ENCODE measurements at regions of chr7 and their contacts with region 1.

Region 1: DNA sequence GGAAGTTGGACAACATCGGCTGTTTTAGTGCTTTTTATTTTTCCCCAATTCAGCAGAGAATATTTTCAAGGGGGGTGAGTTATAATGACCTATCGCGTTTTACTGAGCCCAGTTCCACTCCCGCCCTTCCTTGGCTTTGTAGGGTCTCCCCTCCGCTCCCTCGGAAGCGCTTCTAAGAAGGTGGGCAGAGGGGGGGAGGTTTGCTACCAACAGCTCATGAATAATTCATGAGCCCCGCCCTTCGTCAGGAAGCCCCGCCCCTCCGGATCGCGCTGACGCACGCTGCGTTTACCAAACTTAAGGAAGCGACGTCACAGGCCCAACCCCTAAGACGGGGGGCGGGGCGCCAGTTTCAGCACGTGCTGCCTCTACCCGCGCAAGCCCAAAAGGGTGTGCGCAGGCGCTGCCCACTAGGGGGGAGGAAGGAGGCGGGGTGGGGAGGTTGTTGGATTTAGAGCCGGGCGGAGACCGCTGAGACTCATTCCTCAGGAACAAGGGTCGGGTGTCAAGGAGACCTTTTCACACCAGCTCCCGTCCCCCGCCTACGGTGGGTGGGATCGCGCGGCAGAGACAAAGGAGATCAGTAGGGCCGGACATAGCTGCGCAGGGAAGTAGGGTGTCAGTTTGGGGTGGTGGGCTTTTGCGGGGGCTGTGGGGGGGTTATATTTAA is 529 bp upstream of the MEPCE start:
- DNase-seq: peak; percentile 91 to 100 (median 95)
- ATAC-seq: peak; percentile 73
- H3K4me3 ChIP-seq: peak overlapping the region; percentile 82
- H3K27ac ChIP-seq: peak overlapping the region; percentile 98
- H3K4me1 ChIP-seq: peaks cover 33 to 50% of the 10 kb centered on the region in 2 experiments
- H3K27me3 ChIP-seq: no peaks in the 10 kb centered on the region
- CTCF ChIP-seq: peak in 1 of 3 experiments; percentile 17; a peak in 1 of 6 replicates
- EP300 ChIP-seq: peak; percentile 50
- POLR2A ChIP-seq: peak; percentile 96
- RAD21 ChIP-seq: no peak; a peak in 1 of 4 replicates

Region 2: DNA sequence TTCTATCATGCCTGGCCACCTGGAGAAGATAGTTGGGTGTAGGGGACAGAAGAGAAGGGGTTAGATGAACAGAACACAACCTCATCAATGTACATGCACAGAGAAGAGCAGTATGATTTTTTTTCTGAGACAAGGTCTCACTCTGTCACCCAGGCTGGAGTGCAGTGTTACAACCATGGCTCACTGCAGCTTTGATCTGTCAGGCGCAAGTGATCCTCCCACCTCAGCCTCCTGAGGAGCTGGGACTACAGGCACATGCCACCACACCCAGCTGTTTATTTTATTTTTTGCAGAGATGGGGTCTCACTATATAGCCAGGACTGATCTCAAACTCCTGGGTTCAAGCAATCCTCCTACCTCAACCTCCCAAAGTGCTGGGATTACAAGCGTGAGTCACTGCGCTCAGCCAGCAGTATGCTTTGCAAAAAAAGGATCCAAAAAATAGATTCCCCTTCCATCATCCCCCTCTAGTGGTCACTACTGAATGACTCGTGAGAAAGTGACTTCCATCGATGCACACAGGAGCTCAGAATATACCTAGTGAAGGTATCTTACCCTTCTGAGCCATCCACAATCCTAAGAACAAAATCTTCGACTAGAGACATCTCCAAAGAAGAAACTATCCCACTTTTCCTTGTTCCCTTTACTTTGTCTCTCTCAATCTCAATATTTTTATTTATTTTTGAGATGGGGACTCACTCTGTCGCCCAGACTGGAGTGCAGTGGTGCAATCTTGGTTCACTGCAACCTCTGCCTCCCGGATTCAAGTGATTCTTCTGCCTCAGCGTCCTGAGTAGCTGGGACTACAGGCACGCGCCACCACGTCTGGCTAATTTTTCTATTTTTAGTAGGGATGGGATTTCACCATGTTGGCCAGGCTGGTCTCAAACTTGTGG is 21.6 kb before region 1 on chr7:
- CTCF ChIA-PET with region 1: no interaction called
- POLR2A ChIA-PET with region 1: interaction called, 13 read pairs
- in situ Hi-C with region 1: no loop called
- intact Hi-C with region 1: no loop called
- DNase-seq: peak; percentile 69 to 85 (median 75)
- ATAC-seq: peak; percentile 96
- H3K4me3 ChIP-seq: no peak overlapping the region
- H3K27ac ChIP-seq: no peak overlapping the region
- H3K4me1 ChIP-seq: peaks cover 4 to 5% of the 10 kb centered on the region in 2 experiments; a peak in 1 of 5 replicates
- H3K27me3 ChIP-seq: peaks cover 24 to 33% of the 10 kb centered on the region in 2 experiments
- CTCF ChIP-seq: peak; percentile 74 to 92 (median 86)
- EP300 ChIP-seq: peak; percentile 35; the same call in 1 of the 2 replicates
- POLR2A ChIP-seq: no peak
- RAD21 ChIP-seq: peak; percentile 56 to 79

Region 3: GRCh38 chr7:100418930-100419659 is 10.0 kb before region 1 on chr7:
- CTCF ChIA-PET with region 1: no interaction called
- POLR2A ChIA-PET with region 1: interaction called, 33 read pairs
- in situ Hi-C with region 1: no loop called
- intact Hi-C with region 1: no loop called
- DNase-seq: no peak
- ATAC-seq: peak; percentile 72
- H3K4me3 ChIP-seq: no peak overlapping the region
- H3K27ac ChIP-seq: no peak overlapping the region
- H3K4me1 ChIP-seq: no peaks in the 10 kb centered on the region
- H3K27me3 ChIP-seq: no peaks in the 10 kb centered on the region
- CTCF ChIP-seq: no peak
- EP300 ChIP-seq: no peak
- POLR2A ChIP-seq: no peak
- RAD21 ChIP-seq: no peak

Region 4: GRCh38 chr7:100455206-100455605 is 26.1 kb after region 1 on chr7:
- CTCF ChIA-PET with region 1: no interaction called
- POLR2A ChIA-PET with region 1: interaction called, 30 read pairs
- in situ Hi-C with region 1: no loop called
- intact Hi-C with region 1: loop called (anchors 1 kb)
- DNase-seq: no peak
- ATAC-seq: no peak
- H3K4me3 ChIP-seq: no peak overlapping the region
- H3K27ac ChIP-seq: no peak overlapping the region
- H3K4me1 ChIP-seq: peaks cover 3 to 23% of the 10 kb centered on the region in 2 experiments; a peak in 3 of 5 replicates
- H3K27me3 ChIP-seq: no peaks in the 10 kb centered on the region
- CTCF ChIP-seq: no peak
- EP300 ChIP-seq: no peak
- POLR2A ChIP-seq: no peak
- RAD21 ChIP-seq: no peak

Region 5: GRCh38 chr7:100509231-100509630 is 80.1 kb after region 1 on chr7:
- CTCF ChIA-PET with region 1: no interaction called
- POLR2A ChIA-PET with region 1: no interaction called
- in situ Hi-C with region 1: no loop called
- intact Hi-C with region 1: no loop called
- DNase-seq: peak in 1 of 4 experiments; percentile 2
- ATAC-seq: no peak
- H3K4me3 ChIP-seq: no peak overlapping the region
- H3K27ac ChIP-seq: no peak overlapping the region
- H3K4me1 ChIP-seq: peaks cover 19 to 39% of the 10 kb centered on the region in 2 experiments; a peak in 4 of 5 replicates
- H3K27me3 ChIP-seq: no peaks in the 10 kb centered on the region
- CTCF ChIP-seq: no peak
- EP300 ChIP-seq: no peak
- POLR2A ChIP-seq: no peak
- RAD21 ChIP-seq: no peak

Region 6: DNA sequence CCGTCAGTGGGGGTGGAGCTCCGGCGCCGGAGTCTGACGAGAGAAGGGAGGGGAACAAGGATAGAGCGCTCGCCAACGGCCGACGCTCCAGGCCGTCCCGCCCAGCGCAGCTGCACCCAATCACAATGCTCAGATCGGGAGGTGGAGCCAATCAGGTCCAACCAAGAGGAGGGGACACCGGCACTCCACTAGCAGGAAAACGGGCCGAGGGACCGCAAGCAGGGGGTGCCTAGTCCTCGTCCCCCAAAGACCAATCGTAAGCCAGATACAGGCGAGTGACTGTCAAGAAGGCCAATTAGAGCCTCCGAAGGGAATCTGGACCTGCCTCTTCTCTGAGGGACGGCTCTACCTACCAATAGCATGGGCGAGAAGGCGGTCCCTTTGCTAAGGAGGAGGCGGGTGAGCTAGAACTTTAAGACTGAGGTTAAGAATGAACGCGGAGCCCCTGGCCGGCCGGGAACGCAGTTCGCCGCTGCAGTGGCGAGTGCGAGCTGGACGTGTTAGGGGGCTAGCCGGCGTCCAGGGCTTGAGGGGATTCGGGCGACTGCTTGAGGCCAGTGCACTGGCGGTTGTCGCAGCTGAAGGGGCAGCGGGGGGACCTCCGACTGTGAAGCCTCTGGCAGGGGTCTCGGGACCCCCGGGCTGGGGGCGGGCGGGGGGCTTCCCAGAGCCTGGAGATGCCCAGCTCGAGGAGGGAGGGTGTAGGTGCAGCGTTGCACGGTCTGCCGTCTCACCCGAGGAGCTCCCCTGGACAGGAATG is 157.3 kb after region 1 on chr7 and contains the start of gene FBXO24:
- CTCF ChIA-PET with region 1: no interaction called
- POLR2A ChIA-PET with region 1: interaction called, 22 read pairs
- in situ Hi-C with region 1: no loop called
- intact Hi-C with region 1: no loop called
- DNase-seq: peak; percentile 99 to 100 (median 100)
- ATAC-seq: peak; percentile 94
- H3K4me3 ChIP-seq: peak within 1 kb of the TSS; percentile 75
- H3K27ac ChIP-seq: peak within 1 kb of the TSS; percentile 88
- H3K4me1 ChIP-seq: peaks cover 26 to 66% of the 10 kb centered on the region in 2 experiments
- H3K27me3 ChIP-seq: no peaks in the 10 kb centered on the region
- CTCF ChIP-seq: peak in 1 of 3 experiments; percentile 31; a peak in 1 of 6 replicates
- EP300 ChIP-seq: no peak
- POLR2A ChIP-seq: no peak; the same call in none of the 2 replicates
- RAD21 ChIP-seq: no peak
- polyA plus RNA-seq, gene FBXO24: 0.17 to 0.27 TPM

Measured in K562 (cell line).